CD4-positive, alpha-beta T cell (primary cell): ENCODE measurements at regions of chr1 and their contacts with region 1.

Region 1: DNA sequence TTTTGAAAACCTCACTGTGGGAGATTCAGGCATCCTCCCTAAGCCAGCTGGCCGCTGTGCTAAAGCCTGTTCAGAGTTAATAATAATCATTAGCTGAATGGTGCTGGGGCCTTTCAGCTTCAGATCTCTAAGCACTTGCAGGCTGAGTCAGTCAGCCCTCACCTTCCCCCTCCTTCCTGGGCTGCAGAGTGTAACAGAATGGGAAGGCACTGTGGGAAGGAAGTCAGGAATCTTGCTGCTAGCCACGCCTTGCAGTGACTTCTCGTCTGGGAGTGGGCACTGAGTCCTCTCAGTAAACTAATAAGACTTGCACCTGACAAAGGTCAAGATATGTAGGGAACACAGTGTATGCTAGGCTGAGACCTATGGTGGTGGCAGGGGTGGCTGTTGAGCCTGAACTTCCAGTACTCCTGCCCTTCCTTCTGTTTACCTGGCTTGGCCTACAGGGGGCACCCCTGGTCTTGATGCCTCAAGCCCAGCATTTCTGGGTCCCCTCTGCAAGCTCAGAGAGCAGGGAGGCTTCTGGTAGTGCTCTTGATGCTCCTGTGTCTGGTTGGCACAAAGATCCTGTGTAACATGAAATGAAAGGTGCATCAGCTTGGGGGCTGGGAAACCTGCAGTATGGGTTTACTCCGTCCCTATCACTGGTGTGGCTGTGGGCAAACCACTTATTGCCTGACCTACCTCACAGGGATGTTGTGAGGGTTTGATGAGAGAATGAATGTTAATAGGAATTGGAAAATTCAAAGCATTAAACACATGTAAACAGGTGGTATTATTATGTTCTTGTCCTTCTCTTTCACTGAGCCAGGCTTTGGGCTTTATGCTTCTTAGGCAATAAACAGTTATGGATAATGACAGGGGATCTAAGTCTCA is 6.0 kb downstream of the CYB561D1 start:
- DNase-seq: peak; percentile 27 to 84 (median 67)
- ATAC-seq: peak; percentile 32
- H3K4me3 ChIP-seq: no peak overlapping the region
- H3K4me3 Mint-ChIP-seq: peak overlapping the region; percentile 54
- H3K27ac ChIP-seq: peak overlapping the region; percentile 90 to 94
- H3K27ac Mint-ChIP-seq: peak overlapping the region; percentile 95
- H3K4me1 ChIP-seq: peaks cover 99% of the 10 kb centered on the region
- H3K4me1 Mint-ChIP-seq: peaks cover 93% of the 10 kb centered on the region
- H3K27me3 ChIP-seq: no peaks in the 10 kb centered on the region
- H3K27me3 Mint-ChIP-seq: no peaks in the 10 kb centered on the region
- CTCF ChIP-seq: peak; percentile 58

Region 2: GRCh38 chr1:109516872-109517271 is 17.0 kb after region 1 on chr1:
- CTCF ChIA-PET with region 1: interaction called, 5 read pairs
- POLR2A ChIA-PET with region 1: interaction called, 44 read pairs
- intact Hi-C with region 1: loop called in 1 of 2 experiments (anchors 2 kb)
- DNase-seq: no peak
- ATAC-seq: no peak
- H3K4me3 ChIP-seq: no peak overlapping the region
- H3K4me3 Mint-ChIP-seq: no peak overlapping the region
- H3K27ac ChIP-seq: no peak overlapping the region
- H3K27ac Mint-ChIP-seq: no peak overlapping the region
- H3K4me1 ChIP-seq: no peaks in the 10 kb centered on the region
- H3K4me1 Mint-ChIP-seq: peaks cover 4% of the 10 kb centered on the region
- H3K27me3 ChIP-seq: no peaks in the 10 kb centered on the region
- H3K27me3 Mint-ChIP-seq: no peaks in the 10 kb centered on the region
- CTCF ChIP-seq: no peak

Region 3: DNA sequence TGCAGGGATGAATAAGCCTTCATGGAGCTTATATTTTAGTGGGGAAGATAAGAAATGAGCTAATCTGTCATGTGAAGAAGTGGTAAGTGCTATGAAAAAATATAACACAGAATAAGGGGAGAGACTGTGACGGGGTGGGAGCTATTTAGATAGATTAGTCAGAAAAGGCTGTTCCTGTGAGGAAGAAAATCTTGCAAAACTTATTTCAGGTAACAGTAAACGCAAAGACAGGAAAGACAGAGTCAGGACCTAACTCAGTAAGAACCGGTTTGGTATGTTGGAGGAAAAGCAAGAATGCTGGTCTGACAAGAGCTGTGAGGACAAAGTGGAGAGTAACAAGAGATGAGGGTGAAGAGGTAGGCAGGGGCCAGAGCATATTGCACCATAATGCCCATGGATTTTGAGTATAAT is 70.5 kb after region 1 on chr1:
- CTCF ChIA-PET with region 1: no interaction called
- POLR2A ChIA-PET with region 1: no interaction called
- intact Hi-C with region 1: no loop called
- DNase-seq: no peak
- ATAC-seq: no peak
- H3K4me3 ChIP-seq: no peak overlapping the region
- H3K4me3 Mint-ChIP-seq: no peak overlapping the region
- H3K27ac ChIP-seq: no peak overlapping the region
- H3K27ac Mint-ChIP-seq: no peak overlapping the region
- H3K4me1 ChIP-seq: peaks cover 12% of the 10 kb centered on the region
- H3K4me1 Mint-ChIP-seq: peaks cover 26% of the 10 kb centered on the region
- H3K27me3 ChIP-seq: no peaks in the 10 kb centered on the region
- H3K27me3 Mint-ChIP-seq: no peaks in the 10 kb centered on the region
- CTCF ChIP-seq: no peak